OCI-LY7 (cell line): ENCODE measurements at regions of chr3 and their contacts with region 1.

Region 1: DNA sequence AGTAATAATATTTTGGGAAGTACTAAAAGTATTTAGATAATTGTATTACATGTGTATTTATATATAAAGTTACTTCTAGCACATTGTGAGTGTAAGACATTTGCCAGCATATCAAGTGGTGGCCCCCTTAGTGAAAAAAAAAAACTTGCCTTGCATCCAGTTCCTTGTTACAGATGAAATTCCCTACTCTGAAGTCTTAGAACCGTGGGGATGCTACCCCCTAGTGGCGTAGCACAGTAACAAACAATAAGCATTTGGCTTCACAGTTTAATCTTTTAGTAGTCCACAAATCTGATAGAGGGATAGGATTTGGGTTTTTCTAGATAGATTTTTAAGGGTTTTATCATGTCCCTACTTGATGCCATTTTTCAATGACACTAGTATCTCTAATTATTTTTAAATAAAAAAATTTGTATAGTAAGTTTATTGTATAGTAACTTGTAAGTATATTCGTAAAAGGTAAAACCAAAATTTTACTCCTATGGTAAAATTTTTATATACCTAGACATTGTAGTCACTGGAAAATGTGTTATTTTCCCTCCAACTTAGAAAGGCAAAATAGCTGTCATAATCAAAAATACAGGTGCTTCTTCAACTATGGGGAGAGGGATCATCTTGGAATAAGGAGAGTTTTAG is 14.3 kb downstream of the SMC4 start:
- DNase-seq: peak; percentile 76
- H3K4me3 ChIP-seq: no peak overlapping the region
- H3K27ac ChIP-seq: no peak overlapping the region
- H3K4me1 ChIP-seq: no peaks in the 10 kb centered on the region
- CTCF ChIP-seq: peak; percentile 95

Region 2: DNA sequence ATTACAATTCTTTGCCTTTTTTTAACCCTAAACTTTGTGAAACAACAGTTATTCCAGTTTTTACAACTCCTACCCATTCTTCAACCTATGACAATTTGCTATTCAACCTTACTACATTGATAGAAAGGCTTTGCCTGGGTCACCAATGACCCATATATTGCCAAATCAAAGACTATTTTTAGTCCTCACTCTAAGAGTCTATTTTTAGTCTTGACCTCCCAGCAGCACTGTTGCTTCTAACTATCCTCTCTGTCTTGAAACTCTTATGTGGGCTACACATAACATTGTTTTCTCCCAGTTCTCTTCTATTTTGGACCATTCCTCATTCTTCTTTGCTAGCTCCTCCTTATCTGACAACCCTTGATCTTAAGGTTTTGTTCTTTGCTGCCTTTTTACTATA is 117.1 kb before region 1 on chr3:
- CTCF ChIA-PET with region 1: no interaction called
- POLR2A ChIA-PET with region 1: no interaction called
- intact Hi-C with region 1: no loop called
- DNase-seq: no peak
- H3K4me3 ChIP-seq: no peak overlapping the region
- H3K27ac ChIP-seq: no peak overlapping the region
- H3K4me1 ChIP-seq: no peaks in the 10 kb centered on the region
- CTCF ChIP-seq: no peak

Region 3: DNA sequence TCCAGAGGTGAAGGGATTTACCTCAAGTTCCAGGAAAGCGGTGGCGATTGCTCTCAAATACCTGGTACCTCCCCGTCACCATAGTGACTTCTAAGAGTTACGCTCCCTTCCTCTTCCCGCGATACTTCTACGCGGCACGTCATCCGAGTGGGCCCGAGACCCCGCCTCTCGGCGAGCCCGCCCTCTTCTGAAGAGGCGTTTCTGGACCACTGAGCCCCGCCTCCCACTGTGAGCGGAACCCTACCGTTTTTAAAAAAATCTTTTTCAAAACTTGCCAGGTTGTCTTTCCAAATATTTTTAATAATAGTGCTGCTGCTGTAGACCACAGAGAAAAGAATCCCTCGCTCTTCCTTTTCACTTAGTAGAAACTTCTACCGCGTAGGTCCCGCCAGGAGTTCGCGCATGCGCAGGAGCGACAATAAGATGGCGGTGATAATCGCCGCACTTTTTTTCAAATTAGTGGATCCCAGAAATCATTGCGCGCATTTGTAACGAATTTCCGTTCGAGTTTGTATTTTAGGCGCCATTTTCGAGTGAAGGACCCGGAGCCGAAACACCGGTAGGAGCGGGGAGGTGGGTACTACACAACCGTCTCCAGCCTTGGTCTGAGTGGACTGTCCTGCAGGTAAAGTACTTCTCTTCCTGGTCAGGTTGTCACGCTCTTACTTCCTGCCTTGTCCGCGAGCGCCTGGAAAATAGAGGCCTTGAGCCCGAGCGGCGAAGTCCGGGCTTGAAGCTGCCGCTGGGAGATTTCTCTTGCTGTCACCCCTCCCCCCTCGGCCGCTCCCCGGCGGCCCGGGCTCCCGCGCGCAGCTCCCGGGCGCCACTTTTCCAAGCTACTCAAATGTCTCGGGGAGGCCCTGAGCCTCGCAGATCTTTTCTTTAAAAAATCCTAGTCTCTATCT is 14.4 kb before region 1 on chr3 and contains the starts of genes IFT80 and SMC4:
- CTCF ChIA-PET with region 1: no interaction called
- POLR2A ChIA-PET with region 1: interaction called, 14 read pairs
- intact Hi-C with region 1: no loop called
- DNase-seq: peak; percentile 96
- H3K4me3 ChIP-seq: peak within 1 kb of the TSS; percentile 100
- H3K27ac ChIP-seq: peak within 1 kb of the TSS; percentile 92
- H3K4me1 ChIP-seq: peaks cover 43% of the 10 kb centered on the region
- CTCF ChIP-seq: no peak
- total RNA-seq, gene IFT80: 33.5 and 37.3 TPM in 2 replicates
- total RNA-seq, gene SMC4: 316 and 348 TPM in 2 replicates

Region 4: GRCh38 chr3:160434071-160434470 is 20.3 kb after region 1 on chr3:
- CTCF ChIA-PET with region 1: no interaction called
- POLR2A ChIA-PET with region 1: interaction called, 8 read pairs
- intact Hi-C with region 1: loop called (anchors 2 kb)
- DNase-seq: no peak
- H3K4me3 ChIP-seq: no peak overlapping the region
- H3K27ac ChIP-seq: no peak overlapping the region
- H3K4me1 ChIP-seq: peaks cover 13% of the 10 kb centered on the region
- CTCF ChIP-seq: no peak